ENCODE measurements at regions of chr5 and their contacts with region 1.

Region 1: GRCh38 chr5:168268949-168269943 is 22.2 kb upstream of the WWC1 start:
- DNase-seq: peak; percentile 84
- H3K4me3 Mint-ChIP-seq: peak overlapping the region; percentile 28
- H3K27ac Mint-ChIP-seq: no peak overlapping the region
- H3K4me1 Mint-ChIP-seq: peaks cover 18% of the 10 kb centered on the region
- H3K27me3 Mint-ChIP-seq: peaks cover 9% of the 10 kb centered on the region

Region 2: GRCh38 chr5:168174376-168174775 is 94.9 kb before region 1 on chr5:
- CTCF ChIA-PET with region 1: no interaction called
- POLR2A ChIA-PET with region 1: no interaction called
- intact Hi-C with region 1: no loop called
- DNase-seq: peak; percentile 36
- H3K4me3 Mint-ChIP-seq: no peak overlapping the region
- H3K27ac Mint-ChIP-seq: no peak overlapping the region
- H3K4me1 Mint-ChIP-seq: no peaks in the 10 kb centered on the region
- H3K27me3 Mint-ChIP-seq: peaks cover 2% of the 10 kb centered on the region

Region 3: GRCh38 chr5:168422431-168422830 is 153.2 kb after region 1 on chr5:
- CTCF ChIA-PET with region 1: interaction called, 12 read pairs
- POLR2A ChIA-PET with region 1: no interaction called
- intact Hi-C with region 1: loop called (anchors 1 kb)
- DNase-seq: no peak
- H3K4me3 Mint-ChIP-seq: no peak overlapping the region
- H3K27ac Mint-ChIP-seq: no peak overlapping the region
- H3K4me1 Mint-ChIP-seq: no peaks in the 10 kb centered on the region
- H3K27me3 Mint-ChIP-seq: no peaks in the 10 kb centered on the region

Region 4: DNA sequence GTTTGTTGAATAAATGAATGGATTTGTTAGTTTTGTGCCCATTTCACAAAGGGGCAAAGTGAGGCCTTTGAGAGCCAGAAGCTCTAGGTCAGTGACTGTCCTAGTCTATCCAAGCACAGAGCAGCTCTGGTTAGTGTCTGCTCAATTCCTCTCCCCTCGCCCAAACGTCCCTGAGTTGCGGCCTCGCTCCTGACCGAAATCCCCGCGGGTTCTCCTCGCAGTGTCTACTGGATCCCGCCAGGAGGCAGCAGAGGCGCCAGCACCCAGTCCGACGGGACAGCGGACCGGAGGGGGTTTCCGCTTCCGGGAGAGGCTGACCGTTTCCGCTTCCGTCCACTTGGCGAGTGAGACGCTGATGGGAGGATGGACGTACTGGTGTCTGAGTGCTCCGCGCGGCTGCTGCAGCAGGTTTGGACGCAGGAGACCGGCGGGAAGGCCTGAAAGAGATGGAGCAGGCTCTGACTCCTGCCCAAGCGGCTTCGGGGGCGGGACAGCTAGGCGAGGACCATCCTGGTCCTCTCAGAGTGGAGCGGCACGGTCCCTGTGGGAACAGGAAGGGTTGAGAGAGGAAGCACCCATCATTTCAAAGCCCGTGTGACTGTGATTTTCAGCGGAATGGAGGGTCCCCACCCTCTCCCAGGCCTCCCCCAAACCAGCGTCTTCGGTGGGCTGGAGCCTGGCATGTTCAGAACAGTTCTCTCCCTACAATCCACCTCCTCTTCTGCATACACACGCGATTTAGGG is 217.1 kb after region 1 on chr5 and contains the start of gene RARS1:
- CTCF ChIA-PET with region 1: interaction called, 20 read pairs
- POLR2A ChIA-PET with region 1: no interaction called
- intact Hi-C with region 1: loop called (anchors 1 kb)
- DNase-seq: peak; percentile 96
- H3K4me3 Mint-ChIP-seq: peak within 1 kb of the TSS; percentile 99
- H3K27ac Mint-ChIP-seq: peak within 1 kb of the TSS; percentile 89
- H3K4me1 Mint-ChIP-seq: peaks cover 37% of the 10 kb centered on the region
- H3K27me3 Mint-ChIP-seq: no peaks in the 10 kb centered on the region
- total RNA-seq, gene RARS1: 98.6 to 101 TPM

Measured in activated CD4-positive, alpha-beta memory T cell treated with anti-CD3 and anti-CD28 coated beads for 36 hours (primary cell).